ENCODE measurements at regions of chr2 and their contacts with region 1.

Region 1: DNA sequence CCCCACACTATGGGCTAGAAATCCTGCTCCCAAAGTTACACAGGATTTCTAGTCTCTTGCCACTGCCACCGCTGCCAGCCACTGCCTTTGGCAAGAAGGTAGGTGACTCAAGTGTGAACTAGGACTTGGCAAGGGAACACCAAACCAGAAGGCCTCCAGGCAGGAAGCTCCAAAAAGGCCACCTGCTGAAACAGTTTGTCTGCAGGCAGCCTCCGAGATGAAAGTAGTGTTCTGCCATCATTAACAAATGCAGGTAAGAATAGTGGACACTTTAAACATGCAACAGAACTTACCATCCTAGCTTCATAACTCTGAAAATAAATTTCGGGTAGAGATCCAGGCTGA is 3.9 kb downstream of the ANKRD44 start:
- DNase-seq: peak; percentile 38
- H3K4me3 Mint-ChIP-seq: peak overlapping the region; percentile 89
- H3K27ac Mint-ChIP-seq: peak overlapping the region; percentile 92
- H3K4me1 Mint-ChIP-seq: peaks cover 64% of the 10 kb centered on the region
- H3K27me3 Mint-ChIP-seq: no peaks in the 10 kb centered on the region

Region 2: GRCh38 chr2:197198890-197199289 is 107.8 kb before region 1 on chr2:
- CTCF ChIA-PET with region 1: interaction called, 8 read pairs
- POLR2A ChIA-PET with region 1: interaction called, 15 read pairs
- DNase-seq: peak; percentile 96
- H3K4me3 Mint-ChIP-seq: peak overlapping the region; percentile 82
- H3K27ac Mint-ChIP-seq: peak overlapping the region; percentile 94
- H3K4me1 Mint-ChIP-seq: peaks cover 90% of the 10 kb centered on the region
- H3K27me3 Mint-ChIP-seq: no peaks in the 10 kb centered on the region

Region 3: DNA sequence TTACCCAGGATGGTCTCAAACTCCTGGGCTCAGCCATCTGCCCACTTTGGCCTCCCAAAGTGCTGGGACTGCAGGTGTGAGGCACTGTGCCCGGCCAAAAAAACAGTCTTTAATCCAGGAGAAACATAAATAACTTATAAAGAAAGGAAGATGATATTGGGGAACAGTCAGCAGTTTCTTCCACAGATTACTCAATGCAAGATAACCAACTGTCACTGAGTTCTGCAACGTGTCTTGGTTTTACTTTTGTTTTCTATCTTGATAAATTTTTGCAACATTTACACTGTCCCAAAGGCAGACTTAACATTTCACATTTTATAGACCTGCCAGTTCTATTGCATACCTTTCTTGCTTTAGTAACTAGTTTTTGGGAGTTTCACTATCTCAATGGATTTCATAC is 67.2 kb before region 1 on chr2:
- CTCF ChIA-PET with region 1: interaction called, 3 read pairs
- POLR2A ChIA-PET with region 1: interaction called, 19 read pairs
- DNase-seq: no peak
- H3K4me3 Mint-ChIP-seq: peak overlapping the region; percentile 76
- H3K27ac Mint-ChIP-seq: peak overlapping the region; percentile 92
- H3K4me1 Mint-ChIP-seq: peaks cover 85% of the 10 kb centered on the region
- H3K27me3 Mint-ChIP-seq: no peaks in the 10 kb centered on the region

Region 4: DNA sequence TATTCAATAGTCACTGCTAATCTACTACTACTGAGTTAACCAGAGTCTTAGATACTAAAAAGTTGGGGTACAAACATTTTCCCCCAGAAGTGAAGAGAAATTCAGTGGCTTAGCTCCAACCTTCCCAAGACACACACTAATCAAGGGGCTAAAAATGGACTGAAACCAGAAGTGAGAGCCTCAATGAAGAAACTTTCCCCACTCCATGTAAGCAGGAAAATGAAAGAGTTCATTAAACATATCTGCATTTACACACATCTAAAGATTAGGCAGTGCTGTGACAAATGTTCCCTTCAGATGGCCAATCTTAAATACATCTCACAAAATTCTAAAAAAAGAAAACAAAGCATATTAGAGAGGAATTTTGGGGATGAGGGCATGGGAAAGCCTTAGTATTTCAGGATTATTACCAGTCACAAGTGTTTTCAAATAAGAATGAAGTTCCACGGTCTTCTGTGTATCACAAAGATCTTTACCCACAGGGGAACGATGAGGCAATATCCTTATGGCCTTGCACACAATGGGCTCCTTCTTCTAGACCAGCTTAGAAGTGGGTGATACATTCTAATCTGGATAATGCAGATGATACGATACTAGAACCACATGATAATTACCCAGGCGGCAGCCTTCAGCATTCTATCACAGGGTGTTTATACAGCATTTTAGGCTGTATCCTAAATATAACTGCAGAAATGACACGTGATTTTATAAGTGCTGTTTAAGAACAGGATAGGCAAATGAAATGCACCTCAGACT is 13.2 kb before region 1 on chr2:
- CTCF ChIA-PET with region 1: interaction called, 13 read pairs
- POLR2A ChIA-PET with region 1: interaction called, 7 read pairs
- DNase-seq: peak; percentile 34
- H3K4me3 Mint-ChIP-seq: peak overlapping the region; percentile 61
- H3K27ac Mint-ChIP-seq: peak overlapping the region; percentile 88
- H3K4me1 Mint-ChIP-seq: peaks cover 87% of the 10 kb centered on the region
- H3K27me3 Mint-ChIP-seq: no peaks in the 10 kb centered on the region

Region 5: GRCh38 chr2:197339016-197339415 is 32.3 kb after region 1 on chr2:
- CTCF ChIA-PET with region 1: no interaction called
- POLR2A ChIA-PET with region 1: no interaction called
- DNase-seq: no peak
- H3K4me3 Mint-ChIP-seq: no peak overlapping the region
- H3K27ac Mint-ChIP-seq: no peak overlapping the region
- H3K4me1 Mint-ChIP-seq: peaks cover 10% of the 10 kb centered on the region
- H3K27me3 Mint-ChIP-seq: no peaks in the 10 kb centered on the region

Region 6: DNA sequence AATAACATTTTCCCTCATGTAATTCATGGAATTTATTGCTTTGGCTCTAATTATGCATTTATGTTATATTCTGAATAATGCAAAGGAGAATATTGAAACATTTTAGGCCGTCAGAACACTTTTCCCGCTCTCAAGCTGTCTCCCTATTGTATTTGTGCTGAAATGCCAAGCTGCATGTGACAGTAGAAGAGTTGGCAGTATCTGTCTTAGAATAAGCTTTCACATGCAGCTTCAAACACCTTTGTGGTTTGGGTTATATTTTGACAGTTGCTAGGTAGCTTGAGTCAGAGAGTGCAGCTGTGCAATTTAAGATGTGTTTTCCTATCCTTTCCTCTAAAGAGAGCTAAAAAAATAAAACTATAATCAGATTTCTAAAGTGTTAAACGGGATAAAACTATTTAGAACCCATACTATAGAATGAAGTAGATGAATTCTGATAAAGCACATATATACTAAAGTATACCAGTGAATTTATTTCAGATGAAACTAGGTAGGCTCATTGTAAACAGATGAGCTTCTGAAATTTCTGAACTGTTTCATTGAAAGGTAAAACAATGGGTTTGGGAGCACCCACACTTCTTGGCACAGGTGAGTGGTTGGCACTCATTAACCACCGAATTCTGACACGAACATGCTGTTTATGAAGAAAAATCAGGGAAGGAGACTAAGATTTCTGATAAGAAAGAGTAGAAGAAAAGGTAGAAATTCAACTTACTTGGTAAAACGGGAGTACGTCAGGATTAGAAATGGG is 541.2 kb after region 1 on chr2:
- CTCF ChIA-PET with region 1: no interaction called
- POLR2A ChIA-PET with region 1: no interaction called
- DNase-seq: peak; percentile 47
- H3K4me3 Mint-ChIP-seq: no peak overlapping the region
- H3K27ac Mint-ChIP-seq: peak overlapping the region; percentile 78
- H3K4me1 Mint-ChIP-seq: peaks cover 46% of the 10 kb centered on the region
- H3K27me3 Mint-ChIP-seq: no peaks in the 10 kb centered on the region

Measured in activated CD4-positive, alpha-beta T cell treated with anti-CD3 and anti-CD28 coated beads, Interleukin-2, amount 10 ng/mL, durations not matched to agents 7 days and 5 days (primary cell).